MCF 10A (cell line): ENCODE measurements at regions of chr2 and their contacts with region 1.

Region 1: DNA sequence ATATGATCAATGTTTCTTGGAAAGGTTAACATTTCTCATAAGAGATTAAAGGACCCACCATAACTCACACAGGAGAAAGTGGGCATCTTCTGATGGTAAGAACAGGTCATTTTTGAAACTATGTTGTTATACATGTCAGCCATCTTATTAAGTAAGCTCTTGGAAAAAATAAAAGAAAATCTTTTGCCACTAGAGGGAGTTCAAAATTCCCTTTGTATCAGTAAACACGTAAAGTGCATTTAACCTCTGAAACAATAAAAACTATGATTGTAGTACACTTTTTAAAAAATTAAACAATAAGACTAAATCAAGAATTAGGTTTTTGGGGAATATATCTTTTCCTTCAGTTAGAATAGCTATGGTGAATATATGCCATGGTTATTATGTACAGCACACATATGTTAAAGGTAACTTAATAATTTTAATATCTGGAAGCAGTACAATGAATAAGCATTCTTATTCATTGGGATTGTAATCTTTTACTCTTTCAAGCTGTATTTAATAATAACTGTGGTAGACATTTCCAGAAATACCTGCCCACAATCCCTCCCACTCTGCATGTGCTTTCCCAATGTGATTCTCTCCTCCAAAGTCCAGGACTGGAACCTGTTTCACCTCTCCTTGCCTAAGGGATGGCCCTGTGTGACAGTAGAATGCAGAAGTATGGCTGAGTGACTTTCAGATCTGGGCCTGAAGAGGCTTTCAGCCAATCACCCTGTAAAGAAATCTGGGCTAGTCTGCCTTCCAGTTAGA is 64.2 kb downstream of the RBMS1 start:
- DNase-seq: peak; percentile 62
- H3K4me3 Mint-ChIP-seq: no peak overlapping the region
- H3K27ac Mint-ChIP-seq: peak overlapping the region; percentile 93
- H3K4me1 Mint-ChIP-seq: peaks cover 24% of the 10 kb centered on the region
- H3K27me3 Mint-ChIP-seq: no peaks in the 10 kb centered on the region
- CTCF ChIP-seq: peak; percentile 32

Region 2: GRCh38 chr2:160353166-160353565 is 76.3 kb before region 1 on chr2:
- CTCF ChIA-PET with region 1: interaction called, 3 read pairs
- POLR2A ChIA-PET with region 1: no interaction called
- intact Hi-C with region 1: loop called (anchors 2 kb)
- DNase-seq: peak; percentile 54
- H3K4me3 Mint-ChIP-seq: no peak overlapping the region
- H3K27ac Mint-ChIP-seq: peak overlapping the region; percentile 38
- H3K4me1 Mint-ChIP-seq: peaks cover 63% of the 10 kb centered on the region
- H3K27me3 Mint-ChIP-seq: no peaks in the 10 kb centered on the region
- CTCF ChIP-seq: peak; percentile 40

Region 3: GRCh38 chr2:160411955-160412354 is 17.5 kb before region 1 on chr2:
- CTCF ChIA-PET with region 1: interaction called, 15 read pairs
- POLR2A ChIA-PET with region 1: interaction called, 38 read pairs
- intact Hi-C with region 1: no loop called
- DNase-seq: no peak
- H3K4me3 Mint-ChIP-seq: no peak overlapping the region
- H3K27ac Mint-ChIP-seq: no peak overlapping the region
- H3K4me1 Mint-ChIP-seq: peaks cover 30% of the 10 kb centered on the region
- H3K27me3 Mint-ChIP-seq: no peaks in the 10 kb centered on the region
- CTCF ChIP-seq: no peak

Region 4: GRCh38 chr2:160647967-160648685 is 218.7 kb after region 1 on chr2:
- CTCF ChIA-PET with region 1: interaction called, 12 read pairs
- POLR2A ChIA-PET with region 1: interaction called, 5 read pairs
- intact Hi-C with region 1: no loop called
- DNase-seq: peak; percentile 56
- H3K4me3 Mint-ChIP-seq: peak overlapping the region; percentile 57
- H3K27ac Mint-ChIP-seq: peak overlapping the region; percentile 69
- H3K4me1 Mint-ChIP-seq: peaks cover 36% of the 10 kb centered on the region
- H3K27me3 Mint-ChIP-seq: no peaks in the 10 kb centered on the region
- CTCF ChIP-seq: no peak

Region 5: DNA sequence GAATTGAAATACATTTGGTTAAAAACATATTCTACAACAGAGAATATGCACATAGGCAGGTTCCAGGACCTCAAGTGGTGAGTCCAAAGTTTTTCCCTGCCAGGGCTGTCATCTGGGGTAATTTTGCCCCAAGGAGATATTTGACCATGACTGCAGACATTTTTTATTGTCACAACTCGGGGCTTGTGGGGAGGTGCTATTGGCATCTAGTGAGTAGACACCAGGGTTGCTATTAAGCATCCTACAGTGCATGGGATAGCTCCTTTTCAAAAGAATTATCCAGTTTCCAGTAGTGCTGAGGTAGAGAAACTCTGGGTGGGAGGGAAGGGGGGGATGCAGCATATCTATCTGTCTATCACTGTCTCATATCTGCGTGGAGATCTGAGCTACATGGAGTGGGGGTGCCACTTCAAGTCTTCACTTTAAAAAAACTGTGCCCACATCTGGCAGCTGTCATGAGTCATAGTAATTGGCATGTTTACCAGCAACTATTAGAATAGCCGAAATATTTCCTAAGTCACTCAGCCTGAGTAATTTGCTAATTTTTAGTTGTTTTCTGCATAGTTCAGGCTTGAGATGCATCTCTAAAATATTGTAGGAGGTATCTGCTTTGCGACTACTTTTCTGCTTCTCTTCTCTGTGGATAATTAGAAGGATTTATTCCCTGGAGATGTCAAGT is 318.2 kb after region 1 on chr2:
- CTCF ChIA-PET with region 1: no interaction called
- POLR2A ChIA-PET with region 1: interaction called, 4 read pairs
- intact Hi-C with region 1: loop called (anchors 10 kb)
- DNase-seq: peak; percentile 73
- H3K4me3 Mint-ChIP-seq: no peak overlapping the region
- H3K27ac Mint-ChIP-seq: peak overlapping the region; percentile 78
- H3K4me1 Mint-ChIP-seq: peaks cover 30% of the 10 kb centered on the region
- H3K27me3 Mint-ChIP-seq: no peaks in the 10 kb centered on the region
- CTCF ChIP-seq: no peak